ENCODE measurements at regions of chr11 and their contacts with region 1.

Region 1: GRCh38 chr11:88543902-88544655 is 206.5 kb upstream of the CTSC start:
- DNase-seq: no peak
- H3K4me3 ChIP-seq: no peak overlapping the region
- H3K27ac ChIP-seq: no peak overlapping the region
- H3K4me1 ChIP-seq: peaks cover 0 to 6% (median 4%) of the 10 kb centered on the region in 4 donors
- H3K27me3 ChIP-seq: no peaks in the 10 kb centered on the region
- CTCF ChIP-seq: peak; percentile 77 to 89 (median 85)
- EP300 ChIP-seq: no peak
- POLR2A ChIP-seq: no peak

Region 2: DNA sequence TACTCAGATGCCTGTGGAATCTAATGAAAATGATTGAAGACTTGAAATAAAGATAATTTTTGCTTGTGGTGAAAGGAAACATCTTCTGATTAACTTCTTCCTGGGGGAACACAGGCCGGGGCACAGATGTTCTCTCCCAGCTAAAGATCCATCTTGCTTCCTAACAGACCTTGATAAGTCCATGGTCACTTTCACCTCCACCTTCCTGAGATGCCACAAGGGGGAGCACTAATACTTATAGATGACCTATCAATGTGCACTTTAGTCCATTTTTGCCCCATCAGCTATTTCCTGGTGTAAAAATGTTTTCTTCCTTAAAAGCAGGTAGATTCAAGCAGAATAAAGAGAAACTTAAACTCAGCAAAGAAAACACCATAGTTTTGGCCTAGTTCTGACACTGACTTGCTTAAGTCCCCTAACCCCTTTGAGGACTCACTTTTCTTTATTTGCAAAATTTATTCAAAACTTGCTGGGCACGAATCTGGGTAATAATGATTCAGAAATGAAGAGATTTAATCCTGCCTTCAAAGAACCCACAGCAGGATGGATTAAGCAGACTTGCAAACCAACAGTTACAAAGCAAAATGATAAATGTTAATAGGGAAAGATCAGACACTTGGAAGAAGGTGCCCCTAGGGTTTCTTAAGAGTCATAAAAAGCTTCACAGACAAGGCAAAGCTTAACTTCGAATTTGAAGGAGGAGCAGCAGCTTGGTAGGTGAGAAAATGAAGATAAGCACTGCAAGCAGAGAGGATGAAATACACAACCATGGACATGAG is 527.5 kb before region 1 on chr11:
- intact Hi-C with region 1: loop called (anchors 1 kb)
- DNase-seq: no peak
- H3K4me3 ChIP-seq: no peak overlapping the region
- H3K27ac ChIP-seq: no peak overlapping the region
- H3K4me1 ChIP-seq: no peaks in the 10 kb centered on the region
- H3K27me3 ChIP-seq: no peaks in the 10 kb centered on the region
- CTCF ChIP-seq: peak; percentile 68 to 78 (median 69)
- EP300 ChIP-seq: no peak
- POLR2A ChIP-seq: no peak

Region 3: DNA sequence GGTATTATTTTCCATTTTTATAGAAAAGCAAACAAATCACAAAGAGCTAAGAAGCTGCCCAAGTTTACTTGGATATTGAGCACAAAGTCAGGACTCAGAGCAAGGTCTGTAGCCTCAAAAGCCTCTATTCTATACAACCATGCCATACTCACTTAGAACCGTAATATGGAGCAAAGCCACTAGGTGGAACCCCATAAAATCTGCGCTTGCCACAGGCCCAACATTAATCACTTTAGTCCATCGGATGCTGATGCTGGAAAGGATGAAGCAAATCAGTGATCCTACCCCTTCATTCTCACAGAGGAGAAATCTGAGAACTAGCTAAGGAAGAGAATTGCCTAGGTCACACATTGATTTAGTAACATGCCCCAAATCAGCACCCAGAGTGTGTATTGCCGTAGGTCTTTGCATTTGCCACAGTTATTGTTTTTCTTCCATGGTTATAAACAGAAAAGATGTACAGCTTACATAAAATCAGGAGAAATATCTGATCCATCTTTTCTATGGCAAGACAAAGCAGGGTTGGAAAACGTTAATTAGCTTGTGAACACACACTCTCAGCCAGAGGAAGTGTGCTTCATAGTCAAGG is 312.1 kb before region 1 on chr11:
- intact Hi-C with region 1: loop called (anchors 2 kb)
- DNase-seq: no peak
- H3K4me3 ChIP-seq: no peak overlapping the region
- H3K27ac ChIP-seq: no peak overlapping the region
- H3K4me1 ChIP-seq: no peaks in the 10 kb centered on the region
- H3K27me3 ChIP-seq: no peaks in the 10 kb centered on the region
- CTCF ChIP-seq: peak; percentile 46 to 68 (median 47)
- EP300 ChIP-seq: no peak
- POLR2A ChIP-seq: no peak